Left ventricle myocardium inferior (tissue), 1 donor: ENCODE measurements at regions of chr3 and their contacts with region 1.

Region 1: GRCh38 chr3:136861890-136862616 is at the start of gene NCK1:
- DNase-seq: peak; percentile 99
- H3K4me3 ChIP-seq: peak within 1 kb of the TSS; percentile 97
- H3K27ac ChIP-seq: peak within 1 kb of the TSS; percentile 96
- H3K4me1 ChIP-seq: peaks cover 46% of the 10 kb centered on the region
- H3K27me3 ChIP-seq: no peaks in the 10 kb centered on the region
- CTCF ChIP-seq: peak; percentile 39
- total RNA-seq, gene NCK1: 23.6 TPM

Region 2: DNA sequence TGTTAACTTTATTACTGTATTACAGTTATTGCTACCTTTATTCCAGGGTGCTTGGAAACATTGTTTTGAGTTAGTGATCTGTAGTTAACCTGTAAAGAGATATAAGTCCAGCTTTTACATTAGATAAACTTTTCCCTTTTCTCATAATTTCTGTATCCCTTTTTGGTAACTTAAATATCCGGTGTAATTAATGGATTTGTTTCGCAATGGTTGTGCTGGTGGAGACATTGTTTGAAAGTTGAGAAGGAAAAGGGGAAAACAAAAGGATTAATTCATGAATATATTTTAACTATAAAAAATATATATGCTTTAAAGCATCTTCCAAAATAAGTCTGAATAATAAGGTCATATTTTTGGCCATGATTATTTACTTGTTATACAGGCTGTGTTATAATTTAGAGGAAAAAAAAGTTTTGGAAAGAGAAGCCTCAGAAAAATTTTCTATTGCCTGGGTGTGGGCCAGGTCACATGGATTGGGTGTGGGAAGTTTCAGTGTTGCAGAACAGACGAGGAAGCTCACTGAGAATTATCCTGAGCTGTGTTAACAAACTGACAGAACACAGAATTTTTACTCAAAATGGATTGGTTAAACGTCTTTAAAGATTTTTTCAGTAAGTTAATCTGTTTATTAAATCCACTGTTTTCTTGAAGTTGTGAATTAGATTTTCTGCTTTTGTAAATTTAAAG is 68.1 kb after region 1 on chr3:
- intact Hi-C with region 1: loop called (anchors 10 kb)
- DNase-seq: peak; percentile 53
- H3K4me3 ChIP-seq: peak overlapping the region; percentile 55
- H3K27ac ChIP-seq: peak overlapping the region; percentile 68
- H3K4me1 ChIP-seq: peaks cover 62% of the 10 kb centered on the region
- H3K27me3 ChIP-seq: no peaks in the 10 kb centered on the region
- CTCF ChIP-seq: no peak